Prostate gland (tissue), 2 donors: ENCODE measurements at regions of chr14 and their contacts with region 1.

Region 1: DNA sequence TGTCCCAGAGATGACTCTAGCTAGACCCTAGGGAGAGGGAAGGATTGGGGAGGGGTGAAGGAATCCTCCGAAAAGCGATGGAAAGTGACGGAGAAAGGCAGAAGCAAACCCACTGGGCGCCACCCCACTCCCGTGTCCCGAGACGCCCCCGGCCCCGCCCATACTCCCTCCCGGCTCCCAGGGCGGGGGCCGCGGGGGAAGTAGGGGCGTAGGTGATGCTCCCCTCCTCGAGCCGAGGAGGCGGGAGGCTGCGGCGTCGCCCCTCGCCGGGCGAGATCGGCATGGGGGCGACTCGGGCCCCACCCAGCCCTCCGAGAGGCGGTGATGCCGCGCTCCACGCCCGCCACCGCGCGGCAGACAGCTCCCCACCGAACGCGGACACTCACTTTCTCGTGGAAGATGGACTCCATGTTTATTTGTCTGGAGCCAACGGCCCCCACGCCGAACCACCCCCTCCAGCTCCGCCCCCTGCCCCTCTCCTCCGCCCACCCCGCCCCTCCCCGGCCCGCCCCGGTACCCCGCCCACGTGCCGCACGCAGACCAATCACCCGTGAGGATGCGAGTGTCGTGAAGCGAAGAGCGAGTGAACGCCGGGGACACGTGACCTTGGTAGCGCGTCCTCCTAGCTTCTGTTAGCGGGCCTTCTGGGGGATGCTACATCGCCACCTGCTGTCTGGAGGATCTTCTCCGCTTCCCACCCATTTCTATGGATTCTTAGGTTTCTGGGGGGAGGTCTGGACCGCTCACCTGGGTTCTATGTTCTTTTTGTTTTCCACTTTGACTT is at the start of gene ATXN3:
- DNase-seq: peak; percentile 98
- H3K4me3 ChIP-seq: peak within 1 kb of the TSS; percentile 96 to 99
- H3K27ac ChIP-seq: peak within 1 kb of the TSS; percentile 96 to 98
- H3K4me1 ChIP-seq: peaks cover 3% of the 10 kb centered on the region
- H3K27me3 ChIP-seq: no peaks in the 10 kb centered on the region
- CTCF ChIP-seq: peak; percentile 64 to 90 (median 87)
- POLR2A ChIP-seq: peak; percentile 65
- total RNA-seq, gene ATXN3: 45.1 to 53.5 TPM

Region 2: GRCh38 chr14:92021523-92021922 is 84.8 kb before region 1 on chr14:
- intact Hi-C with region 1: no loop called
- DNase-seq: no peak
- H3K4me3 ChIP-seq: no peak overlapping the region
- H3K27ac ChIP-seq: no peak overlapping the region
- H3K4me1 ChIP-seq: no peaks in the 10 kb centered on the region
- H3K27me3 ChIP-seq: no peaks in the 10 kb centered on the region
- CTCF ChIP-seq: no peak
- POLR2A ChIP-seq: no peak

Region 3: GRCh38 chr14:92039719-92040430 is 66.5 kb before region 1 on chr14 and contains the start of gene TRIP11:
- intact Hi-C with region 1: loop called (anchors 5 kb)
- DNase-seq: peak; percentile 94
- H3K4me3 ChIP-seq: peak within 1 kb of the TSS; percentile 57 to 65
- H3K27ac ChIP-seq: peak within 1 kb of the TSS; percentile 93 to 94
- H3K4me1 ChIP-seq: peaks cover 4% of the 10 kb centered on the region
- H3K27me3 ChIP-seq: no peaks in the 10 kb centered on the region
- CTCF ChIP-seq: peak in 2 of 4 experiments; percentile 29 to 33
- POLR2A ChIP-seq: peak; percentile 72
- total RNA-seq, gene TRIP11: 27.1 to 42.4 TPM